Dorsolateral prefrontal cortex (tissue), 120 donors: ENCODE measurements at regions of chr2 and their contacts with region 1.

Region 1: GRCh38 chr2:111120253-111121027 is at the start of gene BCL2L11:
- DNase-seq: peak; percentile 45 to 92 (median 82)
- H3K4me3 ChIP-seq: peak within 1 kb of the TSS; percentile 57 to 92 (median 82)
- H3K27ac ChIP-seq: peak within 1 kb of the TSS in 40 of 59 donors; percentile 4 to 81 (median 52)
- H3K27me3 ChIP-seq: peaks cover 0 to 30% (median 8%) of the 10 kb centered on the region in 45 donors
- CTCF ChIP-seq: peak in 40 of 56 donors; percentile 8 to 69 (median 37)
- total RNA-seq, gene BCL2L11: 3.2 to 20.0 (median 8.1) TPM

Region 2: DNA sequence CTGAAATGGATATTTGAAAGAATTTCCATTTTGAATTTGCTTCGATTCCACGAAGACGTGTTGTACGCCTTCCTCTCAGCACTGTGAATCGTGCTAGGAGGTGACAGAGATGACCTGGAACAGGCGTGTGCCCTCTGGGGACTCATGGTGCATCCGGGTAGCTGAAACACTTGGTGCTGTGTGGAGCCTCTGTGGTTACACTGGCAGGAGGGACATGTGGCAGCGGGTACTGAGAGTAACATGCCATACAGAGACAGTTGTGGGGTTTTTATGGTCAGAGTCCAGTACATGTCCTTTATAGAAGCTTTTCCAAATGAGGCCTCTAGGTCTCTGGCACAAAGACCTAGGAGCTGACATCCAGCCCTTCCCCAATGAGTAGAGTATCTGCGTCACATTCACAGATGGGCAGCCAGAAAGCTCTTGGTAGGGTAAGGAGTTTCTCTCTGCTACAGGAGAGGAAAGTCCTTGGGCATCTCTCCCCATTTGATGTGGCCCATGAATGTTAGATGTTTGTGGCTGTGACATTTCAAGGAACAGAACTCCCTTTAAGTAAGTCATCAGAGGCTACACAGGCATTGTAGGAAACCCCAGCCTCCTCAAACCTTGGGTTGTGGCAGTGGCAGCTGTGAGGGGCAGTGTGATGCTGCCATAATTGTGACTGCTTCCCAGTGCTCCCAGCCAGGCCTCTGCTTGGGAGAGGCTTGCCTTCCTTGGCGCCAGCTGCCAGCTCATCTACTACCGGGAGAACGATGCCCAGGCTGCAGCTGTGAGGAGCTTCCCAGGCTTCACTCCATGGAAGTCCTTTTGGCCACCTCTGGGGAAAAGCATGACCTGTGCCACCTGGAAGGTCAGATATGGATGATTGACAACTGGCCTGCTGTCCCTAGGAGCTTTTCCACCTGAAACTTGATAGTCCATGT is 307.5 kb before region 1 on chr2:
- intact Hi-C with region 1: loop called (anchors 5 kb)
- DNase-seq: no peak
- H3K4me3 ChIP-seq: no peak overlapping the region
- H3K27ac ChIP-seq: no peak overlapping the region
- H3K27me3 ChIP-seq: peaks cover 0 to 10% (median 0%) of the 10 kb centered on the region in 45 donors
- CTCF ChIP-seq: no peak

Region 3: DNA sequence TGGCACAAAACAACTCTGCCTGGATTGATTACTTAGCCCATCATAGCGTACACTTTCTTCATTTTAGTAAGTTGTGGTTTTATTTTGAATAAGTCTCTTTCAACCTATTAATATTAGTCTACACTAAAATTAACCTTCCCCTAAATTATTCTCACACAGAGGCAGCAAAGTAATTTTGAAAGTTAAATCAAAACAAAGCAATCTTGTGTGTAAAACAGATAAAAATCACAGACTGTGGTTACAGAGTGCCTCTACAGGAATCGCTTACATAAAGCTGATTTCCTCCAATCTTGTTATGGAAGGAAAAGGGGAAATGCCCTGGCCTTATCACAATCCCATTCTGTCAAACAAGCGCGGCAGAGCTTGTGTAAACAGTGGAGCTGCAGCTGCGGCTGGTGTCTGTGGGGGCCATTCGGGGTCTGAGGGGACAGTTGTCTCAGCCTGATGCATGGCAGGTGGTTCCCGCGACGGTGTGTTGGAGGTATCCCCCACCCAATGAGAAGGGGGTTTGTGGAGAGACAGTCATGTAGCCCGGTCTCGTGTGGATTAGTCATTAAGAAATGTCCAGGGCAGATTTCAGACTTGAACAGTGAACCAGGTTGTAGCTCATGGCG is 42.4 kb after region 1 on chr2:
- intact Hi-C with region 1: loop called (anchors 2 to 5 kb)
- DNase-seq: no peak
- H3K4me3 ChIP-seq: no peak overlapping the region
- H3K27ac ChIP-seq: no peak overlapping the region
- H3K27me3 ChIP-seq: no peaks in the 10 kb centered on the region
- CTCF ChIP-seq: no peak

Region 4: DNA sequence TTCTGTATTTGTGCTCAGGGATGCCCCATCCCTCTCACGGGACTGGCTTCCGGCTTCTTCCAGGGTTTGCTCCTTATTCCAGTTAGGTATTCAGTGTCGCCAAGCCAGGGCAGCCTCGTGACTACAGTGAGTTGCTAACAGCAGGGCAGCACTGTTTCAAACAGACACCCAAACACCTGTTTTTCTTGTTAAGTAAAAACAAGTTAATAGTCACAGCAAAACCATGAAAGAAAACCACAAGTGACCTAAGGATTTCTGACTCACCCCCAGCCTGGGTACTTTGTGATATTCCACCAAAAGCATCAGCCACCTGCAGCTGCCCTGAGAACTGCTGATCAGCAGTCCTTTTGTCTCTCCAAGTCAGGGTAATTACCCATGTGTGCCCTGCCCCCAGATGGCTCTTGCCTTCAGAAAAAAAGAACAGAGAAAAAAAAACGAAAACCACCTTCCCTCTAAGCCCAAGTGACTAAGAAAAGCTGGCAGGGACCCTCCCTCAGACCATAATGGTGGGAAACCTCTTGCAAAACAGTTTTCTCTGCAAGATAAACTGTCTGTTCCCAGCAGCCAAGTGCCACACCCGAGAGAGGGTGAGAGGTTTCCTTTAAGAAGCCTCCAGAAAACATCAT is 585.4 kb after region 1 on chr2:
- intact Hi-C with region 1: loop called in 1 of 2 experiments (anchors 10 kb)
- DNase-seq: no peak
- H3K4me3 ChIP-seq: no peak overlapping the region
- H3K27ac ChIP-seq: no peak overlapping the region
- H3K27me3 ChIP-seq: no peaks in the 10 kb centered on the region
- CTCF ChIP-seq: no peak